Activated B cell treated with CpG ODN at 0.5 μM for 24 hours (primary cell): ENCODE measurements at regions of chr1 and their contacts with region 1.

Region 1: DNA sequence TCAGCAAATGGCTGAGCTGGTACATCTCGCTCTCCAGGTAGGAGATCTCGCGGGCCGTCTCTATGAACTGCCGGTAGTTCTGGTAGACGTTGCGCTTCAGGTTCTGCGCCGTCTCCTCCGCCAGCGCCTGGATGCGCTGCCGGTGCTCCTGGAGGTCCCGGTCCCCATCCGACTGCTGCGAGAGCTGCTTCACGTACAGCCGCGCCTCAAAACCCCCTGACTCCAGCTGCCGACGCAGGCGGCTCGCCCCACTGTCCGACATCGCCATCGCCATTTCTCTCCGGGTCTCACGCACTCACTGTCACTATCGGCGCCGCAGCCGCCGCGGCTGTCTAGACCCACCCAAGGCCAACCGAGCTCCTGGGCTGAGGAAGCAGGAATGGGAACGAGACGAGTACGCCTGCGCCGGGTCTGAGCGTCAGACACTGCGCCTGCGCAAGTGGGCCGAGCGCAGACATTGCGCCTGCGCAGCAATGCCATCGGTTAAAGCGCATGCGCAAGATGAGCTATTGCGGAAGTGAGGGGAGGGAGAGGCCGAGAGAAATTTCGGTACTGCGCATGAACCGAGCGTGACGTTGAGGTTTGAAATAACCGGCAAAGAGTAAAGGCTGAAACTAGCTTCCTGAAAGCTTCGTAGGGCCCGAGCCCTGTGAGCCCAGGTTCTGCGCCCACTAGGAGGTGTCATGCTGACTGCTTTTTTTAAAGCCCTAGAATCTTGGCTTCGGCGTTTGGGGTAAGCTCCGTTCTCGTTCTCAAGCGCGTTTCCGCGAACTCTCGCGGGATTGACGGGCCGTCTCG is at the start of gene EXOC8:
- DNase-seq: peak; percentile 99
- ATAC-seq: peak; percentile 78
- H3K4me3 Mint-ChIP-seq: peak within 1 kb of the TSS; percentile 99
- H3K27ac Mint-ChIP-seq: peak within 1 kb of the TSS; percentile 99
- H3K4me1 Mint-ChIP-seq: peaks cover 66% of the 10 kb centered on the region
- H3K27me3 Mint-ChIP-seq: peaks cover 1% of the 10 kb centered on the region
- CTCF ChIP-seq: no peak
- total RNA-seq, gene EXOC8: 21.7 and 24.9 TPM in 2 replicates

Region 2: DNA sequence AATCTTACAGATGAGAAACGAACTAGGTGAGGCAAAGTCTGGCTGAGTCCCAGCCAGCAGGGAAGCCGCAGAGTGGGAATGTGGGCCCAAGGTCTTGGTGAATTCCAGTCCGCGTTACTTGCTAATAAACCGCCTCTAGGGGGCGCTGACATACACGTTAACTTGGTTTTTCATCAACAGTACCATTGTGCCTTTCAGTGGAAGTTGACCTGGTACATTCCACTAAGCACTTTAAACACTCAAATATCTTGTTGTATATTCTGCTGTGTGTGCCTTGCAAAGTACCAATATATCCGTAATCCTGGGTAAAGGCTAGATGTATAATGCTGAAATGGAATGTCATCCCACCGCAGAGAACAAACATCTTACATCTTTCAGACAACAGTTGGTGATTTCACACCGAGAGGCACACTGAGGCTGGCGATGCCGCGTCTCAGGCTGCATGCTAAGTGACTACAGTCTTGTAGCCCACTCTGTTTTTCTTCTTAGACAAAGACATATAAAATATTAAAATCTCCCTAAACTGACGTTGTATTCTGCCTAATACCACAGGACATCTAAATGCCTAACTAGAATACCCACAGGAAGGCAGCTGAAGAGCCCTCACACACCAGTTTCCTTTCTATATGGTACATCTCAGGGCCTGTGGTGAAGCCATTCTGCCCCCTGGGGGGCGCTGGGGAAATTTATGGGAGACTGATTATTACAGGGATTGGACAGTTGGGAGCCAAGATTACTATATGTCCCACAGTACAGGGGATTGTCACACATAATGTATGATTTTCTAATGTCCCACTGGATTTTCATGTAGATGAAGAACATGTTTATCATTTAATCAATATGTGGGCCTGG is 420.2 kb before region 1 on chr1:
- CTCF ChIA-PET with region 1: no interaction called
- POLR2A ChIA-PET with region 1: no interaction called
- intact Hi-C with region 1: loop called (anchors 10 kb)
- DNase-seq: peak; percentile 36
- ATAC-seq: peak; percentile 79
- H3K4me3 Mint-ChIP-seq: no peak overlapping the region
- H3K27ac Mint-ChIP-seq: peak overlapping the region; percentile 11
- H3K4me1 Mint-ChIP-seq: no peaks in the 10 kb centered on the region
- H3K27me3 Mint-ChIP-seq: no peaks in the 10 kb centered on the region
- CTCF ChIP-seq: peak; percentile 52

Region 3: DNA sequence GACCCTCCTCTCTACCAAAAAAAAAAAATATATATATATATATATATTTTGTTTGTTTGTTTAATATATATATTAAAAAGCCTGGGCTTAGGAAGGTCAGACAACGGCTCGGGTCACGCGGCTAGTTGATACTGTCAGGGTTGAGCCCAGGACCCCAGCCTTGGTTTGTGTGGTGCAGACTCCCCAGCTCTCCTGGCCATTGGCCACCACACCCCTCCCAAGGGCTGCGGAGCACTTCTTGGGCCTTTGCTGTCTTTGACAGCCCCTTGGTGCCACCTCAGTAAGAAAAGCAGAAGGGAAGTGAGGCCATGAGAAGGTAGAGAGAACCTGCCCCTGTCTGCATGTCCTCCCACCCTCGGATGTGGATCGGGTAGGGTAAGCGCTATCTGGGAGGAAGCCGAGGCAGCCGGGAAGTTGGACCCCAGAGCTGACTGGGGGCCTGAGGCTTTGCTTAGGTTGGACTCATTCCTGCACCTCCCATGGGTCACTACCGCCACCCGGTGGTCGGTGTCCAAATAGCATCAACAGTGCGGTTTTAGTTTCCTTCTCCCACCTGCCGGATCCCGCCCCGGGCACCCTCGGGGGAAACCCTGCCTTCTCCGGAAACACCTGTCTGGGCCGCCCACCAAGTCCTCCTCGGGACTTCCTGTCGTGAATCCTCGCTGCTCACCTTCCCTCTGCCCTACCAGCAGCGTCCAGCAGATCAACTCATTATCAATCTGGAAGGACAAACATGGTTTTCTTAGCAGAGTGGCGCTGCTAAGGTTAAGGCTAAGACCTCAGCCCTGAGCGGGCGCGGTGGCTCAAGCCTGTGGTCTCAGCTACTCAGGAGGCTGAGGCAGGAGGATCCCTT is 126.4 kb before region 1 on chr1:
- CTCF ChIA-PET with region 1: no interaction called
- POLR2A ChIA-PET with region 1: interaction called, 7 read pairs
- intact Hi-C with region 1: loop called (anchors 10 kb)
- DNase-seq: peak; percentile 90
- ATAC-seq: peak; percentile 89
- H3K4me3 Mint-ChIP-seq: peak overlapping the region; percentile 93
- H3K27ac Mint-ChIP-seq: peak overlapping the region; percentile 85
- H3K4me1 Mint-ChIP-seq: peaks cover 37% of the 10 kb centered on the region
- H3K27me3 Mint-ChIP-seq: no peaks in the 10 kb centered on the region
- CTCF ChIP-seq: peak; percentile 46

Region 4: DNA sequence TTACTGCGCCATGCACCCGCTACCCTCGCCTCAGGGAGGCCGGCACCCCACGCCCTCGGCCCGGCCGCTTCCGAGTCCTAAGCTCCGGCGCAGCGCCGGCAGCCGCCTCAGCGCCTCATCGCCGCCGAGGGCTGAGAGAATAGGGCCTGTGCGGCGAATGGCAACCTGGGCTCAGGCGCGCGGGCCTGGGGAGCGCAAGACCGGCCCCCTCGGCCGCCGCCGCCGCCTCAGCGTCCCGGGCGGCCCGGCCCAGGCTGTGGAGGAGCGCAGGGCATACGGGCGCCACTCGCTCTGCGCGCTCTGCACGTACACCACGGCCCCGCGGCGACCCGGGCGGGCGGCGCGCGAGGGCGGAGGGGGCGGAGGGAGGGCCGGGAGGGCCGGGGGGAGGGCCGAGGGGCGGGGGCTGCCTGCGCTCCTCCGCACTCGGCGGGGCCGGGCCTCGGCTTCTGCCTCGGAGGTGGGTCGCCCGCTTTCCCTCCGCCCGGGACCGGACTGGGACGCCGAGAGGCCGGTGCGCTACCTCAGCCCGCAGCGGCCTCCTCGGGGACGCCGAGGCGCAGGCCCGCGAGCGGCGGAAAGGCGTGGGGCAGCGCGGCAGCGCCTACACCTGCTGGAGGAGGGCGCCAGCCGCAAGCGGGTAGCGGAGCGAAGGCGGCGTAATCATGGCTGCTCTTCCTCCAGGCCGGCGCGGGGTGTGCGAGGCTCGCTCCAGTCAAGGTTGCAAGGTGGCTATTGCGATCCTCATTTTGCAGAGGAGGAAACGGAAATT is 84.5 kb after region 1 on chr1 and contains the start of gene EGLN1:
- CTCF ChIA-PET with region 1: no interaction called
- POLR2A ChIA-PET with region 1: interaction called, 23 read pairs
- intact Hi-C with region 1: loop called (anchors 1 kb)
- DNase-seq: peak; percentile 82
- ATAC-seq: peak; percentile 84
- H3K4me3 Mint-ChIP-seq: peak within 1 kb of the TSS; percentile 97
- H3K27ac Mint-ChIP-seq: peak within 1 kb of the TSS; percentile 91
- H3K4me1 Mint-ChIP-seq: peaks cover 43% of the 10 kb centered on the region
- H3K27me3 Mint-ChIP-seq: no peaks in the 10 kb centered on the region
- CTCF ChIP-seq: no peak
- total RNA-seq, gene EGLN1: 10.7 and 15.6 TPM in 2 replicates

Region 5: GRCh38 chr1:231467986-231468385 is 130.3 kb after region 1 on chr1:
- CTCF ChIA-PET with region 1: no interaction called
- POLR2A ChIA-PET with region 1: no interaction called
- intact Hi-C with region 1: no loop called
- DNase-seq: no peak
- ATAC-seq: no peak
- H3K4me3 Mint-ChIP-seq: no peak overlapping the region
- H3K27ac Mint-ChIP-seq: no peak overlapping the region
- H3K4me1 Mint-ChIP-seq: no peaks in the 10 kb centered on the region
- H3K27me3 Mint-ChIP-seq: peaks cover 17% of the 10 kb centered on the region
- CTCF ChIP-seq: no peak